Dorsolateral prefrontal cortex (tissue), 120 donors: ENCODE measurements at regions of chr1 and their contacts with region 1.

Region 1: DNA sequence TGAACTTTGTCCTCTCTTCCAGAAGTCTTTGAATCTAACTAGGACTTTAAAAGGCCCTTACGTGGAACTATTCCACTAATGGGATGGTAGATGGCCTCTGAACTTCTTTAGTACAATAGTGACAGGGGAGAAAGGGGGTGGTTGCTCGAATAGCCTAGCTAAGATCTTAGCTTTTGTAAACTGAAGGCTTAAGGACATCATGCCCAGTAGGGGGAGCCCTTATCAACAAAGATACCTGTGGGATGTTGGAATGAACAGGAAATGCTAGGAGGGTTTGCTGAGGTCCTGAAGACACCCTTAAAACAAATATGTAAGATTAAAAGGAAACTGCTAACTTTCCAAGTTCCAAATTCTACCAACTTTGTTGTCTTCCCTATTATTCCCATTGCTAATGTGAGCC is 33.2 kb downstream of the NHLH2 start:
- DNase-seq: peak in 3 of 10 donors; percentile 8 to 69 (median 68)
- H3K4me3 ChIP-seq: no peak overlapping the region
- H3K27ac ChIP-seq: no peak overlapping the region
- H3K27me3 ChIP-seq: no peaks in the 10 kb centered on the region
- CTCF ChIP-seq: peak; percentile 43 to 86 (median 73)

Region 2: DNA sequence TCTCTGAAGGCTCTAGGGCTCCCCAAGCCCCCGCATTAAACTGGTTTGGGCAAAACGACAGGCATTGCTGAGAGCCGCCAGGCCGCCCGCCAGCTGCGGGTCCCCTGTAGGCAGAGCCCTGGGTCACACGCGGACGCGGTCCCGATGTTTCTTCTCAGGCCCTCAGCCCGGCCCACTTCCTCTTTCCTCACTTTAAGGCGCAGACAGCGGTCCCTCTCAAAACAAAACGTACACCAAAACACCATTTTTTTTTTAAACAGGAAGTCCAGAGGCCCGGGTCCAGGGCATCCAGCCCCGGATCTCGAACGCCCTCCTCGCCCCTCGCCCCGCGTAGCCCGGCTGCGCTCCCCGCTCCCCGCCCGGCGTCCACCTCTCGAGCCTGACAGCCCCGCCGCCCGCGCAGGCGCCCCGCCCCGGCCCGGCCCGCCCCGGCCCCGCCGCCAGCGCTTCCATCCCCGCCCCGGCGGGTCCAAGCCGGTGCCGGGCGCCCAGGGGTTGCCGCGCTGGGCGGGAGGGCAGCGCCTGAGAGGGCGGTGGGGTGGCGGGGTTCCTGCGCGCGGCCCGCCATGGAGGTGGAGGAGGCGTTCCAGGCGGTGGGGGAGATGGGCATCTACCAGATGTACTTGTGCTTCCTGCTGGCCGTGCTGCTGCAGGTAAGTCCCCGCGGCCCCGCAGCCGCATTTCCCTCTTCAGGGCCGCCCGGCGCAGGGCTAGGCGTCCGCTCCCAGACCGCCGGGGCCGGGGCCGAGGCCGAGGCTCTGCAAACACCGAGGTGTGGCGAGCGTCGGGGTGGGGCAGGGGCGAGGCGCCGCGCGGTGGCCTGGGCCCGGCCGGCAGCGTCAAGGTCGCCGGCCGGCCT is 168.6 kb after region 1 on chr1 and contains the start of gene SLC22A15:
- intact Hi-C with region 1: loop called (anchors 2 to 10 kb)
- DNase-seq: peak; percentile 49 to 78 (median 56)
- H3K4me3 ChIP-seq: peak within 1 kb of the TSS; percentile 37 to 91 (median 79)
- H3K27ac ChIP-seq: peak within 1 kb of the TSS; percentile 87 to 99 (median 97)
- H3K27me3 ChIP-seq: no peaks in the 10 kb centered on the region
- CTCF ChIP-seq: peak in 7 of 56 donors; percentile 7 to 20 (median 10)
- total RNA-seq, gene SLC22A15: 18.9 to 85.6 (median 29.7) TPM

Region 3: GRCh38 chr1:115980998-115981993 is 173.6 kb after region 1 on chr1:
- intact Hi-C with region 1: loop called (anchors 2 to 10 kb)
- DNase-seq: peak in 3 of 10 donors; percentile 3 to 43 (median 36)
- H3K4me3 ChIP-seq: peak overlapping the region in 2 of 59 donors; percentile 1 to 12
- H3K27ac ChIP-seq: peak overlapping the region in 55 of 59 donors; percentile 11 to 99 (median 97)
- H3K27me3 ChIP-seq: no peaks in the 10 kb centered on the region
- CTCF ChIP-seq: peak in 55 of 56 donors; percentile 43 to 77 (median 64)

Region 4: GRCh38 chr1:116020668-116021275 is 213.0 kb after region 1 on chr1:
- intact Hi-C with region 1: loop called in 1 of 2 experiments (anchors 5 kb)
- DNase-seq: peak in 9 of 10 donors; percentile 37 to 84 (median 60)
- H3K4me3 ChIP-seq: no peak overlapping the region
- H3K27ac ChIP-seq: peak overlapping the region in 31 of 59 donors; percentile 1 to 79 (median 44)
- H3K27me3 ChIP-seq: no peaks in the 10 kb centered on the region
- CTCF ChIP-seq: peak; percentile 26 to 85 (median 66)

Region 5: DNA sequence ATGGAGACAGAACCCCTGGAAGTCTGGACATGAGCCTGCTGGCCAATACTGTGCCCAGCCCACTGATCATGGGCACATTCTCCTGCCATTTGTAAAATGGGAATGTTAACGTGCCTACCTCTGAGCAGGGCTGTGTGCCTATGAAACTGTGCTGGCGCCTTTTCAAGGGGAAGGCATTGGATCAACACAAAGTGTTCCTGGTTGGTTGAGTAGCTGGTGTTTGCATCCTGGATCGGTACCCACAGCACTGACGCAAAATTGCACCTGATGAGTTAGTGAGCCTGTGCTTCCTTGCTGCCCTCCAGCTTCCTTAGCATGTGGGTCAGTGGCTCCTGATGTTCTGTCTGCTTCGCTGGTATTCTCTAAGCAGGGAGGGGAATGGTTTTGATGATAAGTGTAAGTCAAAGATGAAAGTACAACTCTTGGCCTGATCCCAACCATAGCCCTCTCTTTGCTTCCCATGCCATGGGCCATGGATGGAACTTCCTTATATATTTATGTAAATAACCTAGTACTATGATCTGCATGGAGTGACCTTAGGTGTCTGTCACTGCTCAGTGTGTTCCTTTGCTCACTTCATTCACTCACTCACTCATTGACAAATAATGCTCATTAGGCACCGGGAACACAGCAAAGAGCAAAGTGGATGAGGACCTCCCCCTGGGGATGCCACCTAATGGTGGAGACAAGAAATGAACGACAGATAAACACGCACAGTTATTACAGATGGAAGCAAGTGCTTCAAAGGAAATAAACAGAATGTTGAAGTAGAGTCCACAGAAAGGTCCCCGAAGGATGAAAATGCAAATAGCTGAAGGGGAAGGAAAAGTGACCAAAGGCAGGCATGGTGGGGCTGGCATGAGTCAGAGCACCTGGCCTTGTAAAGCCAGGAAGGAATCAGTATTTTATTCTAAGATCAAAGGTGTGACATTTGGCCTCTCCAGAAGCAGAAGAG is 326.2 kb after region 1 on chr1:
- intact Hi-C with region 1: loop called in 1 of 2 experiments (anchors 5 kb)
- DNase-seq: no peak
- H3K4me3 ChIP-seq: no peak overlapping the region
- H3K27ac ChIP-seq: no peak overlapping the region
- H3K27me3 ChIP-seq: no peaks in the 10 kb centered on the region
- CTCF ChIP-seq: peak in 25 of 56 donors; percentile 3 to 40 (median 20)

Region 6: GRCh38 chr1:116498789-116499628 is 691.3 kb after region 1 on chr1:
- intact Hi-C with region 1: loop called in 1 of 2 experiments (anchors 10 kb)
- DNase-seq: peak in 4 of 10 donors; percentile 36 to 70 (median 58)
- H3K4me3 ChIP-seq: peak overlapping the region in 1 of 59 donors; percentile 20
- H3K27ac ChIP-seq: no peak overlapping the region
- H3K27me3 ChIP-seq: no peaks in the 10 kb centered on the region
- CTCF ChIP-seq: peak in 55 of 56 donors; percentile 73 to 96 (median 88)